PC-9 (cell line): ENCODE measurements at regions of chr3 and their contacts with region 1.

Region 1: DNA sequence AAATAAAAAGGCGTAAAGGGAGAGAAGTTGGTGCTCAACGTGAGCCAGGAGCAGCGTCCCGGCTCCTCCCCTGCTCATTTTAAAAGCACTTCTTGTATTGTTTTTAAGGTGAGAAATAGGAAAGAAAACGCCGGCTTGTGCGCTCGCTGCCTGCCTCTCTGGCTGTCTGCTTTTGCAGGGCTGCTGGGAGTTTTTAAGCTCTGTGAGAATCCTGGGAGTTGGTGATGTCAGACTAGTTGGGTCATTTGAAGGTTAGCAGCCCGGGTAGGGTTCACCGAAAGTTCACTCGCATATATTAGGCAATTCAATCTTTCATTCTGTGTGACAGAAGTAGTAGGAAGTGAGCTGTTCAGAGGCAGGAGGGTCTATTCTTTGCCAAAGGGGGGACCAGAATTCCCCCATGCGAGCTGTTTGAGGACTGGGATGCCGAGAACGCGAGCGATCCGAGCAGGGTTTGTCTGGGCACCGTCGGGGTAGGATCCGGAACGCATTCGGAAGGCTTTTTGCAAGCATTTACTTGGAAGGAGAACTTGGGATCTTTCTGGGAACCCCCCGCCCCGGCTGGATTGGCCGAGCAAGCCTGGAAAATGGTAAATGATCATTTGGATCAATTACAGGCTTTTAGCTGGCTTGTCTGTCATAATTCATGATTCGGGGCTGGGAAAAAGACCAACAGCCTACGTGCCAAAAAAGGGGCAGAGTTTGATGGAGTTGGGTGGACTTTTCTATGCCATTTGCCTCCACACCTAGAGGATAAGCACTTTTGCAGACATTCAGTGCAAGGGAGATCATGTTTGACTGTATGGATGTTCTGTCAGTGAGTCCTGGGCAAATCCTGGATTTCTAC is at the start of gene RARB:
- DNase-seq: peak; percentile 39 to 50
- H3K4me3 ChIP-seq: peak within 1 kb of the TSS; percentile 51; the same call in 1 of the 2 replicates
- H3K27ac ChIP-seq: peak within 1 kb of the TSS; percentile 64
- H3K4me1 ChIP-seq: peaks cover 31% of the 10 kb centered on the region
- H3K27me3 ChIP-seq: no peaks in the 10 kb centered on the region
- CTCF ChIP-seq: no peak
- total RNA-seq, gene RARB: 0.75 and 1.0 TPM in 2 replicates

Region 2: DNA sequence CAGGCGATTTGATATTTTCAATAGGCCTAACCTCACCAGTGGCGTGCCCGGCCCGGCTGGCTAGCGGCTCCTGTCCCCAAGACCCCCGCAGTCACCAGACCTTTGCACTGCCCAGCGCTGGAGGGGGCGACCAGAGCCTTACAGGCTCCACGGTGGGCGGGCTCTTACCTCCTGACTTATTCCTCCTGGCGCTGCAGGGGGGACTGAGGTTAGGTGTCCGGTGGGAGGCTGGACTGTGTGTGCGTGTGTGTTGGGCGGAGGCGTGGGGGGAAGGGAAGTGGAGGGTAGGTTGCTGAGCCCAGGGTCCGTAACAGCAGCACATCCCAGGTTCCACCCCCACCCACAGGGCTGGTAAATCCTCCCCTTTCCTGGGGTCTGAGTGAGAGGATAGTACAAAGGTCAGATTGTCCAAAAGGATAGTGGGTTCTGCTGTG is 906.0 kb before region 1 on chr3:
- CTCF ChIA-PET with region 1: no interaction called
- POLR2A ChIA-PET with region 1: no interaction called
- intact Hi-C with region 1: no loop called
- DNase-seq: no peak
- H3K4me3 ChIP-seq: peak overlapping the region; percentile 87; the same call in 1 of the 2 replicates
- H3K27ac ChIP-seq: no peak overlapping the region
- H3K4me1 ChIP-seq: peaks cover 37% of the 10 kb centered on the region
- H3K27me3 ChIP-seq: no peaks in the 10 kb centered on the region
- CTCF ChIP-seq: no peak

Region 3: DNA sequence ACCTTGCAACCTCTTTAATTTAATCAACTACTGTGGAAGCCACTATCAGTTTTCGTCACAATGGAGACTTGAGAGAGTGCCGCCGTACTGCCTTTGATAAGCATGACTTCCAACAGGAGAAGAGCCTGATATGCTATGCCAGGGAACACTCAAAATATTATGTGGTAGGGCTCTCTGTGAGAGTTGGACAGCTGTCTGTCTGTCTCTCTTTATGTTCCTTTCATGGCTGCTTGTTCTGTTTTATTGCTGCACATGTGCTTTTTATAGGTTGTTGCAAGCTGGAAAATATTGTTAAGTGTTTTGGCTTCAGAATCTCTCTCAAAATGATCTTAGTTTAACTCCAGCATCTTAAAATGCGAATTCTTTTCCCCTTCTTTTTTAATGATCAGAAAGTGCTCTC is 249.5 kb before region 1 on chr3:
- CTCF ChIA-PET with region 1: no interaction called
- POLR2A ChIA-PET with region 1: no interaction called
- intact Hi-C with region 1: no loop called
- DNase-seq: no peak
- H3K4me3 ChIP-seq: no peak overlapping the region
- H3K27ac ChIP-seq: no peak overlapping the region
- H3K4me1 ChIP-seq: no peaks in the 10 kb centered on the region
- H3K27me3 ChIP-seq: no peaks in the 10 kb centered on the region
- CTCF ChIP-seq: no peak

Region 4: GRCh38 chr3:25455441-25456132 is 27.4 kb after region 1 on chr3:
- CTCF ChIA-PET with region 1: no interaction called
- POLR2A ChIA-PET with region 1: interaction called, 16 read pairs
- intact Hi-C with region 1: loop called (anchors 2 kb)
- DNase-seq: peak in 1 of 2 experiments; percentile 62
- H3K4me3 ChIP-seq: no peak overlapping the region
- H3K27ac ChIP-seq: peak overlapping the region; percentile 64
- H3K4me1 ChIP-seq: peaks cover 56% of the 10 kb centered on the region
- H3K27me3 ChIP-seq: no peaks in the 10 kb centered on the region
- CTCF ChIP-seq: no peak

Region 5: DNA sequence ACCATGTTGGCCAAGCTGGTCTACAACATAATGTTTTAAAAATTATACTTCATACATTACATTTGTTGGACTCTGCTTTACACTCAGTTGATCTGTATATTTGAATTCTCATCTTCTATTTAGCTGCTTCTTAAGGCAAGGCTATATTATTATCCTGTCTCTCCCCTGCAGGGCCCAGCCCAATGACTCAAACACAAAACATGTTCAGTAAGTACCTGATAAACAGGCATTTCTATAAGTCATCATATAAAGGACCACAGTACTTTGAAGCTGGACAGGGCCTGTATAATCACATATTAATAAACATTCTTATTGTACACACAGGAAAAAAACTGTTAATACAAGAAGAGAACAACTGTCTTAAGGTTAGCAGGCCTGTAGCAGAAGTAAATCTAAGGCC is 318.9 kb after region 1 on chr3:
- CTCF ChIA-PET with region 1: no interaction called
- POLR2A ChIA-PET with region 1: no interaction called
- intact Hi-C with region 1: no loop called
- DNase-seq: no peak
- H3K4me3 ChIP-seq: no peak overlapping the region
- H3K27ac ChIP-seq: no peak overlapping the region
- H3K4me1 ChIP-seq: peaks cover 7% of the 10 kb centered on the region
- H3K27me3 ChIP-seq: no peaks in the 10 kb centered on the region
- CTCF ChIP-seq: no peak

Region 6: DNA sequence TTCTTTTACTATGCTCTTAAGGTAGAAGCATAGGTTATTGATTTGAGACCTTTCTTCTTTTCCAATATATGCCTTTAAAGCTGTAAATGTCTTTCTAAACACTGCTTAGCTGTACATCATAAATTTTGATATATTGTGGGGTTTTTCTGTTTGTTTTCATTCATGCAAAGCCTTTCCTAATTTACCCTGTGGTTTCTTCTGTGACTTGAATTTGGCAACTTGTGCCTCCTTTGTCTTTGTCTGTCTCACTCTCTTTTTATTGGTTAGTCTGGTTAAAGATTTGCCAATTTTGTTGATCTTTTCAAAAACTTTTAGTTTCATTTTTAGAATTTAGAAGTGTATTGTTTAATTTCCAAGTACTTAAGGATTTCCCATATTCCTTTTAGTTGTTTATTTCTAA is 704.8 kb after region 1 on chr3:
- CTCF ChIA-PET with region 1: no interaction called
- POLR2A ChIA-PET with region 1: no interaction called
- intact Hi-C with region 1: no loop called
- DNase-seq: no peak
- H3K4me3 ChIP-seq: no peak overlapping the region
- H3K27ac ChIP-seq: no peak overlapping the region
- H3K4me1 ChIP-seq: no peaks in the 10 kb centered on the region
- H3K27me3 ChIP-seq: no peaks in the 10 kb centered on the region
- CTCF ChIP-seq: no peak